Right cardiac atrium (tissue), 5 donors: ENCODE measurements at regions of chr12 and their contacts with region 1.

Region 1: DNA sequence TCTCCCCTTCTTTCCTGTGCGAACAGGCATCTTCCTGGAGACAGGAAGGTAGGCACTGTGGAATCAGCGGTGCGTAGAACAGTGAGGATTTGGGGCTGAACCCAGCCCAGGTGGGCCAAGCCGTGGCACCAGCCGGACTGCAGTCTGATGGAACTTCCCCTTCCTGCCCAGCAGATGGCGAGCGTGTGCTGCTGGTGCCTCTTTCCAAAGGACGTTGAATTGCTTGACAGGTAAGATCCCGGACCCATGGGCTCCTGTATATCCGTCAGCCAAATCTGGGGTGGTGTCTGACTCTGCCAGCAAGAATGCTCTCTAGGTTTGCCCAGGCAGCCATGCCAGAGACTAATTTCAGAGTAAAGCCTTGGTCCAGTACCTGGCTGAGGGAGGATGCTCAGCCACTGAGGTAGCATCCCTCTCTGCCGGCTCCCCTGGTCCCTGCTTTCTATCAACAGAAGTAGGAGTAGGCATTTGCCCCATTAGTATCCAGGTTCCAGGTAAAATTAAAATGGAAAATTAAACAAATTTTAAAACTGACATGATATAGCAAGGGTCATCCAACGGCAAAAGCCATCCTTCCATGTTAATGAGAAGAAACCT is 21.1 kb upstream of the KCNA5 start:
- DNase-seq: peak; percentile 41 to 73 (median 67)
- ATAC-seq: peak; percentile 44 to 48
- H3K4me3 ChIP-seq: no peak overlapping the region
- H3K27ac ChIP-seq: no peak overlapping the region
- H3K4me1 ChIP-seq: peaks cover 3% of the 10 kb centered on the region
- H3K27me3 ChIP-seq: no peaks in the 10 kb centered on the region

Region 2: GRCh38 chr12:5059358-5059757 is 36.8 kb after region 1 on chr12:
- intact Hi-C with region 1: no loop called
- DNase-seq: peak in 2 of 3 donors; percentile 43 to 68
- ATAC-seq: peak; percentile 78 to 85
- H3K4me3 ChIP-seq: no peak overlapping the region
- H3K27ac ChIP-seq: peak overlapping the region; percentile 84
- H3K4me1 ChIP-seq: peaks cover 21% of the 10 kb centered on the region
- H3K27me3 ChIP-seq: no peaks in the 10 kb centered on the region

Region 3: GRCh38 chr12:5083955-5084849 is 61.6 kb after region 1 on chr12:
- intact Hi-C with region 1: loop called (anchors 2 to 5 kb)
- DNase-seq: no peak
- ATAC-seq: peak; percentile 63 to 67
- H3K4me3 ChIP-seq: no peak overlapping the region
- H3K27ac ChIP-seq: no peak overlapping the region
- H3K4me1 ChIP-seq: peaks cover 2% of the 10 kb centered on the region
- H3K27me3 ChIP-seq: no peaks in the 10 kb centered on the region

Region 4: GRCh38 chr12:5171701-5172100 is 149.1 kb after region 1 on chr12:
- intact Hi-C with region 1: loop called in 1 of 4 experiments (anchors 10 kb)
- DNase-seq: no peak
- ATAC-seq: peak; percentile 21 to 31
- H3K4me3 ChIP-seq: no peak overlapping the region
- H3K27ac ChIP-seq: no peak overlapping the region
- H3K4me1 ChIP-seq: no peaks in the 10 kb centered on the region
- H3K27me3 ChIP-seq: no peaks in the 10 kb centered on the region